ENCODE measurements at regions of chr9 and their contacts with region 1.

Region 1: DNA sequence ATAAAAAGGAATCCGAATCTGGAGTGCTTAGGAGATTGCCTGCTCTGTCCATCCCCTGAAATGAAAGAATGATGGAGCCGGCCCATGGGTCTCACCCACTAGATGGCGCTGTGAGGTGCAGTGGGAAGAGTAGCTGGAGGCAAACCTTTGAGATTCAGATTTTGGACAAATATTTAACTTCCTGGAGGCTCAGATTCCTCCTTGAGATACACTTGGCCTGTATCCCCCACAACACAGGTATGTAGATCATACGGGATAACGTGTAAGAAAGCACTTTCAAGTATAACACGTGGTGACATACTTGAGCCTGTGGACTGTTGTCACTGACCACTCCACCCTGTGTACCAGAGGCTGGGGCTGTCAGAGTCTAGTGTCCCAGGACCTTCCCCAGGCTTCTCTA is 32.3 kb downstream of the TRMO start:
- DNase-seq: peak; percentile 82
- H3K4me3 Mint-ChIP-seq: no peak overlapping the region
- H3K27ac Mint-ChIP-seq: no peak overlapping the region
- H3K4me1 Mint-ChIP-seq: peaks cover 7% of the 10 kb centered on the region
- H3K27me3 Mint-ChIP-seq: no peaks in the 10 kb centered on the region

Region 2: DNA sequence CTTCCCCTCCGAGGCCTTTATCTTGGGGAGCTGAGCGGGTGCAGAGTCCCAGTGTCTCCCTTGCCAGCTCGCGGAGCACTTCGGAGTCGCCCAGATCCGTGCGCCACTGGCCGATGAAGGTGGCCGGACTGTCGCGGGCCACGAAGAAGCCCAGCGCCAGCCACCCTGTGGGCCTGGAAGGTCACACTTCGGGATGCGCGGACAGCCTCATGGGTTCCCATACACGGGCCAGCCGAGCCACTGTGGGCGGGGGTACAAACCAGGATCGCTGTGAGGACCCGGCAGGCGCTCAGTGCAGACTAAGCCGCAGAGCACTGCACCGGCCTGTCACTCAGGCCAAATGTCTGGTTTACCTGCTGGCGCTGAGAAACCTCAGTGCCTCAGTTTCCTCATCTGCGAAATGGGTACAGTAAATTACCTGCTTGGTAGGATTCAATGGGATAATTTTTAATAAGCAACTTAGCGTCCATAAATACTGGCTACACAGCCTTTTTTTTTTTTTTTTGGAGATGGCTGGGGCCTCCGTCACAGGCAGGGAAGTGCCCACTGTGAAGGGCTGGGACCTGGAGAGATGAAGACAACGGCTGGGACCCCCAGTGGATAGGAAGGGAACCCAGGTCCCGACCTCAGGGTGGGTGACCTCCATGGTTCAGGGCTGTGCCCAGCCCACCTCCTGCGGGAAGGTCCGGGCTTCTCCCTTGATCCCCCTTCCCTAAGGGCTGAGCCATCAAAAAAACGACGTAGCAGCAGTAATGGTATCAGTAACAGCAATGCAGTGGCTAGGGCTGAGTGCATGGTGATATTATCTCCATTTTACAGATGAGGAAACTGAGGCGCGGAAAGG is 812.4 kb before region 1 on chr9:
- CTCF ChIA-PET with region 1: no interaction called
- POLR2A ChIA-PET with region 1: no interaction called
- intact Hi-C with region 1: no loop called
- DNase-seq: no peak
- H3K4me3 Mint-ChIP-seq: no peak overlapping the region
- H3K27ac Mint-ChIP-seq: no peak overlapping the region
- H3K4me1 Mint-ChIP-seq: no peaks in the 10 kb centered on the region
- H3K27me3 Mint-ChIP-seq: peaks cover 47% of the 10 kb centered on the region

Region 3: DNA sequence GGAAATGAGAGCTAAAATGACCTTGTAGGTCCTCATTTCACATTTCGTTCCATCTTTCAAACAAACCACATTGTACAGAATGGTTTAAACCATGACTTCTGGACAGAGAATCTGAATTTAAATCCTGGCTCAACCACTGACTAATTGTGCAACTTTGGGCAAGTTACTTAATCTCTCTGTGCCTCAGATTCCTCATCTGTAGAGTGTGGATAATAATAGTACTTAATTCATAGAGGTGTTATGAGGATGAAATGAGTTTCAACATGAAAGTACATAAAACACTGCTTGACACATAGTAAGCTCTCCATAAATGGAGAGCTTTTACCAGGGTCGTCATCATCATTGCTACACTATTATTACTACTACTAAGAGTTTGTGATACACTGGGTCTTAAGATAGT is 83.3 kb before region 1 on chr9:
- CTCF ChIA-PET with region 1: no interaction called
- POLR2A ChIA-PET with region 1: no interaction called
- intact Hi-C with region 1: no loop called
- DNase-seq: no peak
- H3K4me3 Mint-ChIP-seq: no peak overlapping the region
- H3K27ac Mint-ChIP-seq: no peak overlapping the region
- H3K4me1 Mint-ChIP-seq: peaks cover 4% of the 10 kb centered on the region
- H3K27me3 Mint-ChIP-seq: peaks cover 15% of the 10 kb centered on the region

Region 4: DNA sequence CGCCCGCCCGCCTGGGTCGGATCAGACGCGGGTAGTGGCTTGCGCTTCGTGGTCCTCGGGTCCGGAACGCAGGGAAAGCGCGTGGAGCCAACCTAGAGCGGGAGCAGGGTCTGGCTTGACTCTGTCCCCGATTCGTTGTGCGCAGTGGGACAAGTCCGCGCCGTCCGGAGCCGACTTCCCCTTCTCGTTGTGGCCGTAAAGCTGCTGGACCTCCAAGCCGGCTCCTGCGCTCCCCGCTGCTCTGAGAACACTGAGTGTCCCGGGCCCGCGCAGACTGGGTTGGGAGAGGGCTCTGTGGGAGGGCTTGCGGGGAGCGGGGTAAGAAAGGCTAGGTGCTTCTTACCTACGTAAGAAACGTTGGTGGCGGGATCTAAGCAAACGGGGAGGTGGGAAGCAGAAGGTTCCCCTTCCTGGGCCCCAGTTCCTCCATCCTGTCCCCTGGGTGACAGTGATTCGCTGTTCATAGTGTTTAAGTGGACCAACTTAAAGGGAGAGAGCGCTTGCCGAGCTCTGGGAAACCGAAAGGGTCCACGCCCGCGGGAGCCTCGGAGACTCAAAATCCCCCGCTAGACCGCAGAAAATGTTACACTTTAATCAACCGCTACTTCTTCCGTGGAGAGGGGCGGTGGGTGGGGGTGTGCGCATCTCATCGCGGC is 41.3 kb before region 1 on chr9:
- CTCF ChIA-PET with region 1: interaction called, 15 read pairs
- POLR2A ChIA-PET with region 1: no interaction called
- intact Hi-C with region 1: no loop called
- DNase-seq: peak; percentile 39
- H3K4me3 Mint-ChIP-seq: peak overlapping the region; percentile 58
- H3K27ac Mint-ChIP-seq: no peak overlapping the region
- H3K4me1 Mint-ChIP-seq: peaks cover 21% of the 10 kb centered on the region
- H3K27me3 Mint-ChIP-seq: peaks cover 66% of the 10 kb centered on the region

Region 5: DNA sequence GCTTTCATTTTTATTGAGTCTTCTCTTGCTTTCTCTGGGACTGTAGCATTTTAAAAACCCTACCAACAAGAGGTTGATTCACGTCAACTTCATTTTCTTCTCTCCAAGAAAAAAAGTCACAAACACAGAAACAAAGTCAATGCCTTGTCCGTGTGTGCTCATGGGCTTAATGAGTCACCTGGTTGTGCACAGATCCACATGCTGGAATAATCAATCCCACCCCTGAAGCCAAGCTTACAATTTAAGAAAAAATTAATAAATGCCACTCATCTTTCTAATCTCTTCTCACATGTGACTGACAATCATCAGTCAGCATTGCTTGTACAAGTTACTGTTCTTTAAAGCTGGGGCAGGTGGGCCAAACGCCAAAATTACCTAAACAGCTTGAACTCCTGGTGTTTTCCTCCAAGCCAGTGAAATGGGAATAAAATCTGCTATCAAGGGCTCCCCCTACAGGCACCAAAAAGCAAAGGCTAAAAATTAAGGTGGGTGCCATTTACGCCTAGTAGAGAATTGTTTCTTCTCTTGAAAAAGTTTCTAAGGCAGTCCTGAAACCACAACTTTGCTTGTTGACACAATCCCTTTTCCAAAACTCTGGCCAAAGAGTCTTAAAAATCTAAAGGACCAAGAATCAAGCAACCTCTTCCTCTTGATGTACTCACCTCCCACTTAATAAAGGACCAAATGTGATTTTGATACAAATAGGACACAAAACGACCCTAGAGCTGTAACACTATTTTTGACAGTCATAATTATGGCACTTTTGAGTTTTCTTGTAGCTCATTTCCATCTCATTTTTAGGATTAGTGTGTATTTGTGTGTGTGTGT is 10.9 kb after region 1 on chr9:
- CTCF ChIA-PET with region 1: interaction called, 172 read pairs
- POLR2A ChIA-PET with region 1: no interaction called
- intact Hi-C with region 1: loop called (anchors 1 kb)
- DNase-seq: no peak
- H3K4me3 Mint-ChIP-seq: no peak overlapping the region
- H3K27ac Mint-ChIP-seq: no peak overlapping the region
- H3K4me1 Mint-ChIP-seq: peaks cover 55% of the 10 kb centered on the region
- H3K27me3 Mint-ChIP-seq: no peaks in the 10 kb centered on the region

Region 6: GRCh38 chr9:97906236-97906831 is 16.3 kb after region 1 on chr9:
- CTCF ChIA-PET with region 1: interaction called, 172 read pairs
- POLR2A ChIA-PET with region 1: no interaction called
- intact Hi-C with region 1: loop called (anchors 1 kb)
- DNase-seq: peak; percentile 74
- H3K4me3 Mint-ChIP-seq: peak overlapping the region; percentile 66
- H3K27ac Mint-ChIP-seq: peak overlapping the region; percentile 94
- H3K4me1 Mint-ChIP-seq: peaks cover 78% of the 10 kb centered on the region
- H3K27me3 Mint-ChIP-seq: no peaks in the 10 kb centered on the region

Region 7: GRCh38 chr9:97954550-97954989 is 64.5 kb after region 1 on chr9:
- CTCF ChIA-PET with region 1: interaction called, 7 read pairs
- POLR2A ChIA-PET with region 1: no interaction called
- intact Hi-C with region 1: loop called (anchors 2 kb)
- DNase-seq: peak; percentile 66
- H3K4me3 Mint-ChIP-seq: no peak overlapping the region
- H3K27ac Mint-ChIP-seq: no peak overlapping the region
- H3K4me1 Mint-ChIP-seq: peaks cover 4% of the 10 kb centered on the region
- H3K27me3 Mint-ChIP-seq: no peaks in the 10 kb centered on the region